ENCODE measurements at regions of chr17 and their contacts with region 1.

Region 1: GRCh38 chr17:76868176-76868668 is at the start of gene MGAT5B:
- DNase-seq: peak; percentile 57 to 81
- H3K4me3 ChIP-seq: peak within 1 kb of the TSS; percentile 32 to 34
- H3K27ac ChIP-seq: no peak within 1 kb of the TSS
- H3K4me1 ChIP-seq: peaks cover 0 to 26% (median 20%) of the 10 kb centered on the region in 4 donors
- H3K27me3 ChIP-seq: peaks cover 6 to 86% of the 10 kb centered on the region in 2 donors
- CTCF ChIP-seq: peak; percentile 73 to 97

Region 2: DNA sequence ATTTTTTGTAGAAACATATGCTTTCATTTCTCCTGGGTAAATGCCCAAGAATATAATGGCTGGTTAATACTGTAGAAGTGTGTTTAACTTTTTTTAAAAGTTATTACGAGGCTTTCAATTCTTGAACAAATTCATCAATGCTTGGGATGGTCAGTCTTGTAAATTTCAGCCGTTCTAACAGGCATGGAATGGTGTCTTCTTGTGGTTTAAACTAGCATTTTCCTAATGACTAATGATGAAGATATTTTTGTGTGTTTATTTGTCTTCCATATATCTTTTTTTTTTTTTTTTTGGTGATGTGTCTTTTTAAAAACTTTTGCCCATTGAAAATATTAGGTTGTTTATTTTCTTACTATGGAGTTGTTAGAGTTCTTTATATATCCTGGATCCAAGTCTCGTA is 67.1 kb after region 1 on chr17:
- intact Hi-C with region 1: no loop called
- DNase-seq: no peak
- H3K4me3 ChIP-seq: no peak overlapping the region
- H3K27ac ChIP-seq: no peak overlapping the region
- H3K4me1 ChIP-seq: no peaks in the 10 kb centered on the region
- H3K27me3 ChIP-seq: peaks cover 0 to 50% of the 10 kb centered on the region in 2 donors
- CTCF ChIP-seq: no peak

Region 3: DNA sequence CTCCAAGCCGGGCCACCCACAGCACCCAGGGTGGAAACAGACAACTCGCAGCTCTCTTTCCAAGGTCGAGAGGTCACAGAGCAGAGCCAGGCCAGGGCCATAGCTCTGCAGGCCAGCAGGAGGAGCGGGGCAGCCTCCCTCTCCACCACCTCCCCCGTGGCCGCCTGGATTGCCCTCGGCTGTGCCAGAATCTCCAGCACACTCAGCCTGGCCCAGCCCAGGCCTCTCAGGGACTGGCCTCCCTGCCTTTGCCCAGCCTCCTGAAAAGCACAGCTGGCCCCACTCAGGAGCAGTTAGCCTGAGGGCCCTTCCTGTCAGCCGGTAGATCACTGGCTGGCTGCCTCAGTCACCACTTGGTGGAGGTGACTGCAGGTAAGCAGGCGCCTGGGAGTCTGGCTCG is 186.7 kb after region 1 on chr17:
- intact Hi-C with region 1: loop called (anchors 5 kb)
- DNase-seq: no peak
- H3K4me3 ChIP-seq: no peak overlapping the region
- H3K27ac ChIP-seq: no peak overlapping the region
- H3K4me1 ChIP-seq: no peaks in the 10 kb centered on the region
- H3K27me3 ChIP-seq: peaks cover 0 to 85% of the 10 kb centered on the region in 2 donors
- CTCF ChIP-seq: no peak

Region 4: GRCh38 chr17:77247048-77247541 is 378.9 kb after region 1 on chr17:
- intact Hi-C with region 1: loop called (anchors 10 kb)
- DNase-seq: peak; percentile 67 to 85
- H3K4me3 ChIP-seq: peak overlapping the region; percentile 46 to 62
- H3K27ac ChIP-seq: peak overlapping the region in 1 of 2 donors; percentile 46
- H3K4me1 ChIP-seq: peaks cover 3 to 13% (median 10%) of the 10 kb centered on the region in 4 donors
- H3K27me3 ChIP-seq: peaks cover 0 to 12% of the 10 kb centered on the region in 2 donors
- CTCF ChIP-seq: peak; percentile 98 to 99

Measured in tibial artery (tissue), 4 donors.